ENCODE measurements at regions of chr7 and their contacts with region 1.

Region 1: DNA sequence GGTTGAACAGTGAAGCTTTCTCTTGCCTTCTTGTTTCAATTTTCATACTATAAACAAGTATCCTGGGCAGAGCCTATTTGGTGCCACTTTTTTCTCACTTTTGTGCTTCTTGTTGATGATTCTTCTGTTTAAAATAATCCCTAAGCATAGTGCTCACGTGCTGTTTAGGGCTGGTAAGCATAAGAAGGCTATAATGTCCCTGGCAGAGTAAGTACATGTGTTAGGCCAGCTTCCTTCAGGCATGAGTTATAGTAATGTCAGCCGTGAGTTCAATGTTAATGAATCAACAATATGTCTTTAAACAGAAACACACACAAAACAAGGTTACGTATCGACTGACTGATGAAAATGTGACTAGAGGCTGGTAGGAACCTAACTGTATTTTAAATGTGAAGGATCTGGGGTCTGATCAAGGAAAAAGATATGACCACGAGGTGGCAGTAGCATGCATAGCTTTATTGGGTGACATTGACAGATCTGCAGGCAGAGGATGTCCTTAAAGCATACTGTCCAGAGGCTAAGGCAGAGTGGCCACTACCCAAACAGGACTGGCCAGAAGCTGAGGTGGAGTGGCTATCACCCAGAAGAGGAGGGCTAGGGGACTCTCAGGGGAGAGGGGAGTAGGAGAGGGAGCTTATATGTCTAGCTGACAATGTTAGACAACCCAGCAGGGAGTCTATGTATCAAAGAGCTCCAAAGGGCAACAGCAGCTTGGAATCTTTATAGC is 113.7 kb downstream of the BRAF start:
- DNase-seq: peak; percentile 64 to 67 (median 65)
- H3K4me3 ChIP-seq: no peak overlapping the region
- H3K4me3 Mint-ChIP-seq: no peak overlapping the region
- H3K27ac ChIP-seq: no peak overlapping the region
- H3K27ac Mint-ChIP-seq: peak overlapping the region in 5 of 7 donors; percentile 0 to 87 (median 74)
- H3K4me1 ChIP-seq: no peaks in the 10 kb centered on the region
- H3K4me1 Mint-ChIP-seq: peaks cover 5 to 7% (median 6%) of the 10 kb centered on the region in 4 donors
- H3K27me3 ChIP-seq: no peaks in the 10 kb centered on the region
- H3K27me3 Mint-ChIP-seq: no peaks in the 10 kb centered on the region

Region 2: DNA sequence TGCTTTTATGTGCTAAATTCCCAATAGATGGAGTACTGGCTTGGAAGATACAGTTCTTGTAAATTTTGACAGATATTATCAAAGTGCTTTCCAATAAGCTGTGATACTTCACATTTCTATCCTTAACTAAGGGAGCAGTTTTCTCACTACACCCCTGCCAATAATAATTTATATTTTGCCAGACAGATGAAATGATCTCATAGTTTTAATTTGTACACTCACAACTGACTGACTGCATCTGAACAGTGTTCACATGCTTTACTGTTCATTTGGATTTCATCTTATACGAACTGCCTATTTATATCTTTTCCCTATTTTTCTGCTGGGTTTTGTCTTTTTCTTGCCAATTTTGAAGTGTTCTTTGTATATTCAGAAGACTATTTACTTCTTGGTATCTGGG is 17.7 kb after region 1 on chr7:
- CTCF ChIA-PET with region 1: interaction called, 16 read pairs
- POLR2A ChIA-PET with region 1: no interaction called
- intact Hi-C with region 1: no loop called
- DNase-seq: no peak
- H3K4me3 ChIP-seq: no peak overlapping the region
- H3K4me3 Mint-ChIP-seq: no peak overlapping the region
- H3K27ac ChIP-seq: no peak overlapping the region
- H3K27ac Mint-ChIP-seq: peak overlapping the region in 2 of 7 donors; percentile 5 to 84
- H3K4me1 ChIP-seq: no peaks in the 10 kb centered on the region
- H3K4me1 Mint-ChIP-seq: peaks cover 0 to 3% (median 0%) of the 10 kb centered on the region in 4 donors
- H3K27me3 ChIP-seq: no peaks in the 10 kb centered on the region
- H3K27me3 Mint-ChIP-seq: no peaks in the 10 kb centered on the region

Region 3: GRCh38 chr7:140924019-140924820 is 113.2 kb after region 1 on chr7:
- CTCF ChIA-PET with region 1: interaction called, 4 read pairs
- POLR2A ChIA-PET with region 1: interaction called, 3 read pairs
- intact Hi-C with region 1: loop called (anchors 1 kb)
- DNase-seq: peak; percentile 79 to 92 (median 83)
- H3K4me3 ChIP-seq: peak overlapping the region; percentile 68 to 90
- H3K4me3 Mint-ChIP-seq: no peak overlapping the region
- H3K27ac ChIP-seq: peak overlapping the region; percentile 95
- H3K27ac Mint-ChIP-seq: no peak overlapping the region
- H3K4me1 ChIP-seq: peaks cover 28% of the 10 kb centered on the region
- H3K4me1 Mint-ChIP-seq: peaks cover 11 to 29% (median 18%) of the 10 kb centered on the region in 4 donors
- H3K27me3 ChIP-seq: no peaks in the 10 kb centered on the region
- H3K27me3 Mint-ChIP-seq: peaks cover 0 to 4% of the 10 kb centered on the region in 2 donors

Region 4: GRCh38 chr7:140983802-140984201 is 172.8 kb after region 1 on chr7:
- CTCF ChIA-PET with region 1: interaction called, 14 read pairs
- POLR2A ChIA-PET with region 1: no interaction called
- intact Hi-C with region 1: no loop called
- DNase-seq: peak in 1 of 5 donors; percentile 1
- H3K4me3 ChIP-seq: no peak overlapping the region
- H3K4me3 Mint-ChIP-seq: no peak overlapping the region
- H3K27ac ChIP-seq: no peak overlapping the region
- H3K27ac Mint-ChIP-seq: no peak overlapping the region
- H3K4me1 ChIP-seq: no peaks in the 10 kb centered on the region
- H3K4me1 Mint-ChIP-seq: no peaks in the 10 kb centered on the region
- H3K27me3 ChIP-seq: no peaks in the 10 kb centered on the region
- H3K27me3 Mint-ChIP-seq: peaks cover 7 to 10% of the 10 kb centered on the region in 2 donors